PC-3 (cell line): ENCODE measurements at regions of chr12 and their contacts with region 1.

Region 1: DNA sequence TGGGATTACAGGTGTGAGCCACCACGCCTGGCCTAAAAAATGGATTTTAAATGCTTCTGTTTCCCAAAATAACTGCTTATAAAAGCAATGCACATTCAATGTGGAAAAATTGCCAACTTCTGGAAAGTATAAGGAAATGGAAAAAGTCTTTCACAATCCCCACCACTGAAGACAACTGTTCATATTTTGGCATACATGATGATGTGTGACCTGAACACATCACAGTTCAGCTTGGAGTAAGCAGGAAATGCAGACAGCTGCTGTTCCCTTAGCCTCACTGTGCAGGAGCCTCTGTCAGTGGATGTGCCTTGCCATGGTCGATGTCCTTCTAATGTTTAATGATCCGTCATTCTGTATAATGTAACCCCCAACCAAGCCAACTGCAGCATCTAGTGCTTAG is 5.2 kb downstream of the MTERF2 start:
- DNase-seq: no peak
- ATAC-seq: no peak
- H3K4me3 ChIP-seq: no peak overlapping the region
- H3K27ac ChIP-seq: no peak overlapping the region
- H3K4me1 ChIP-seq: peaks cover 9% of the 10 kb centered on the region; the same call in 1 of the 2 replicates
- H3K27me3 ChIP-seq: no peaks in the 10 kb centered on the region
- CTCF ChIP-seq: no peak

Region 2: GRCh38 chr12:107099917-107100316 is 118.1 kb after region 1 on chr12:
- CTCF ChIA-PET with region 1: no interaction called
- POLR2A ChIA-PET with region 1: interaction called, 13 read pairs
- intact Hi-C with region 1: no loop called
- DNase-seq: no peak
- ATAC-seq: no peak
- H3K4me3 ChIP-seq: no peak overlapping the region
- H3K27ac ChIP-seq: no peak overlapping the region
- H3K4me1 ChIP-seq: peaks cover 4% of the 10 kb centered on the region; the same call in 1 of the 2 replicates
- H3K27me3 ChIP-seq: no peaks in the 10 kb centered on the region
- CTCF ChIP-seq: no peak